Naive thymus-derived CD4-positive, alpha-beta T cell (primary cell): ENCODE measurements at regions of chr21 and their contacts with region 1.

Region 1: GRCh38 chr21:33542640-33543504 is at the start of gene SON:
- DNase-seq: peak; percentile 87 to 99 (median 98)
- ATAC-seq: peak; percentile 94
- H3K4me3 ChIP-seq: peak within 1 kb of the TSS; percentile 95
- H3K4me3 Mint-ChIP-seq: peak within 1 kb of the TSS; percentile 90 to 100 (median 97)
- H3K27ac ChIP-seq: peak within 1 kb of the TSS; percentile 99
- H3K27ac Mint-ChIP-seq: peak within 1 kb of the TSS; percentile 99 to 100 (median 99)
- H3K4me1 ChIP-seq: peaks cover 20 to 30% of the 10 kb centered on the region in 2 donors
- H3K4me1 Mint-ChIP-seq: peaks cover 29 to 54% (median 45%) of the 10 kb centered on the region in 7 donors
- H3K27me3 ChIP-seq: no peaks in the 10 kb centered on the region
- H3K27me3 Mint-ChIP-seq: peaks cover 0 to 5% (median 0%) of the 10 kb centered on the region in 5 donors
- total RNA-seq, gene SON: 337 to 497 (median 431) TPM

Region 2: GRCh38 chr21:32727687-32728455 is 815.0 kb before region 1 on chr21 and contains the start of gene SYNJ1:
- CTCF ChIA-PET with region 1: no interaction called
- POLR2A ChIA-PET with region 1: no interaction called
- intact Hi-C with region 1: loop called (anchors 1 to 10 kb)
- DNase-seq: peak; percentile 90 to 97 (median 93)
- ATAC-seq: peak; percentile 95
- H3K4me3 ChIP-seq: peak within 1 kb of the TSS; percentile 78
- H3K4me3 Mint-ChIP-seq: peak within 1 kb of the TSS; percentile 92 to 100 (median 98)
- H3K27ac ChIP-seq: peak within 1 kb of the TSS; percentile 82
- H3K27ac Mint-ChIP-seq: peak within 1 kb of the TSS; percentile 90 to 99 (median 97)
- H3K4me1 ChIP-seq: peaks cover 7 to 42% of the 10 kb centered on the region in 2 donors
- H3K4me1 Mint-ChIP-seq: peaks cover 29 to 78% (median 69%) of the 10 kb centered on the region in 7 donors
- H3K27me3 ChIP-seq: no peaks in the 10 kb centered on the region
- H3K27me3 Mint-ChIP-seq: no peaks in the 10 kb centered on the region
- total RNA-seq, gene SYNJ1: 21.5 to 28.5 (median 22.2) TPM

Region 3: DNA sequence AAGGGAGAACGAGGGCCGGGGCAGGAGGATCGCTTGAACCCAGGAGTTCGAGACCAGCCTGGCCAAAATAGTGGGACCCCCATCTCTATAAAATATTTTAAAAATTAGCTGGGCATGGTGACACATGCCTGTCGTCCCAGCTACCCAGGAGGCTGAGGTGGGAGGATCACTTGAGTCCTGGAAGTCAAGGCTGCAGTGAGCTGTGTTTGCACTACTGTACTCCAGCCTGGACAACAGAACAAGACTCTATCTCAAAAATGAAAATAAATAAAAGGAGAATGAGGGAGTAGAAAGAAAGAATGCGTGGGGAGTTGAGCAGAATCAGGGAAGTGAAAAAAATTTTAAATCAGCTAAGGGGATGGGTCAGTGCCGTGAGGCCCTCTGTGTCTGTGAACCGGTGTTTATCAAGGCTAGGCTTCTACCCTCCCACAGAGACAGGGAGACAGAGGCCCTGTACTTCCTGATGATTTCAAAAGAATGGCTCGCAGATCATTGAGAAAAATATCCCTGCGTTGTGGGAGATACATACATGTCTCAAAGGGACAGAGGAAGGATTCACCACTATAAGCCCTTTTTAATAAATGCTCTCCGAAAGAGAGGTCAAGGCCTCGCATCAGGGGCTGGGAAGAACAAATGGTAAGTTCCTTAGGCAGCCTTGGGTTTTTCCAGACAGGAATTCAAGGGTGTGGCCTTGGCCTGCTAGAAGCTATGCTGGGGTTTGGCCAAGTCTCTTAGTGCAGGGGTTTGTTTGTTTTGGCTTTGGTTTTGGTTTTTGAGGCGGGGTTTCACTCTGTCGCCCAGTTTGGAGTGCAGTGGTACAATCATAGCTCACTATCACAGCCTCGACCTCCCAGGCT is 256.0 kb before region 1 on chr21:
- CTCF ChIA-PET with region 1: no interaction called
- POLR2A ChIA-PET with region 1: no interaction called
- intact Hi-C with region 1: no loop called
- DNase-seq: no peak
- ATAC-seq: no peak
- H3K4me3 ChIP-seq: no peak overlapping the region
- H3K4me3 Mint-ChIP-seq: no peak overlapping the region
- H3K27ac ChIP-seq: no peak overlapping the region
- H3K27ac Mint-ChIP-seq: peak overlapping the region in 2 of 9 donors; percentile 33 to 43
- H3K4me1 ChIP-seq: peaks cover 0 to 3% of the 10 kb centered on the region in 2 donors
- H3K4me1 Mint-ChIP-seq: peaks cover 8 to 20% (median 12%) of the 10 kb centered on the region in 7 donors
- H3K27me3 ChIP-seq: no peaks in the 10 kb centered on the region
- H3K27me3 Mint-ChIP-seq: no peaks in the 10 kb centered on the region

Region 4: GRCh38 chr21:33380483-33380998 is 162.3 kb before region 1 on chr21:
- CTCF ChIA-PET with region 1: no interaction called
- POLR2A ChIA-PET with region 1: no interaction called
- intact Hi-C with region 1: loop called in 1 of 2 experiments (anchors 5 kb)
- DNase-seq: peak; percentile 46 to 81 (median 63)
- ATAC-seq: peak; percentile 78
- H3K4me3 ChIP-seq: peak overlapping the region; percentile 0
- H3K4me3 Mint-ChIP-seq: peak overlapping the region; percentile 34 to 98 (median 66)
- H3K27ac ChIP-seq: peak overlapping the region; percentile 53
- H3K27ac Mint-ChIP-seq: peak overlapping the region; percentile 69 to 91 (median 87)
- H3K4me1 ChIP-seq: peaks cover 45 to 60% of the 10 kb centered on the region in 2 donors
- H3K4me1 Mint-ChIP-seq: peaks cover 48 to 70% (median 63%) of the 10 kb centered on the region in 7 donors
- H3K27me3 ChIP-seq: peaks cover 0 to 6% of the 10 kb centered on the region in 2 donors
- H3K27me3 Mint-ChIP-seq: peaks cover 0 to 40% (median 0%) of the 10 kb centered on the region in 5 donors

Region 5: DNA sequence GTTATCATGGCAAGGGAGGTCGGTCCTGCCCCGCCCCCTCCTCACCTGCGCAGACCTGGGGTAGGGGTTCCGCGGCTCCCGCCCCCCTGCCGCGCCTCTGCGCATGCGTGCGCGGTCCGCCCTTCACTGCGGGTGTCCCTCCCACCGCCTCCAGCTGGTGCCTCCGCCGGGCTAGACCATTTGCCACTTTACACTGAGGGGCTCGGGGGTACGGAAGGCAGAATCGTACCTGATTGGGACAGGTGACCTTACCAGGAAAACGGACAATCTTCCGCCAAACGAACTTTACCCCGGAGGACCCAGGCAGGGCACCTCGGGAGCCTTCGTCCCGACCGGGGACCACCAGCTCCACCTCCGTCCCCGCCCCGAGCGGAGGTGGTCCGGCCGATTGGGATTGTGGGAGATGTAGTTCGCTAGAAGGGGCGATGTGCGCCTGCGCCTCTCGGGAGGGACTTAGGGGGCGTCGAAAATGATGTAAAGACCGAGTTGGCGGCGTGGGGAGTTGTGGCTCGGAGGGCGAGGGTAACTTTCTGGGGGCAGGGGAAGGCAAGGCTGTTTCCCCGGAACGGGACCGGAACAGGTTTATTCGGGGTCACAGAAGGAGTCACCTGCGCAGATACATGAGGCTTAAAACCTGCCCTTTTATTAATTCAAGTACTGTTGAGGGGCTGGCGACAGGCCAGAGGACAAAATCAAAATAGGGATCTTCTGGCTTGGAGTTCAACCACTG is 51.3 kb before region 1 on chr21 and contains the start of gene DNAJC28:
- CTCF ChIA-PET with region 1: interaction called, 3 read pairs
- POLR2A ChIA-PET with region 1: interaction called, 19 read pairs
- intact Hi-C with region 1: loop called (anchors 1 kb)
- DNase-seq: peak; percentile 91 to 96 (median 95)
- ATAC-seq: peak; percentile 99
- H3K4me3 ChIP-seq: peak within 1 kb of the TSS; percentile 93
- H3K4me3 Mint-ChIP-seq: peak within 1 kb of the TSS; percentile 86 to 97 (median 92)
- H3K27ac ChIP-seq: peak within 1 kb of the TSS; percentile 74
- H3K27ac Mint-ChIP-seq: peak within 1 kb of the TSS; percentile 73 to 97 (median 92)
- H3K4me1 ChIP-seq: peaks cover 0 to 5% of the 10 kb centered on the region in 2 donors
- H3K4me1 Mint-ChIP-seq: peaks cover 5 to 14% (median 12%) of the 10 kb centered on the region in 7 donors
- H3K27me3 ChIP-seq: no peaks in the 10 kb centered on the region
- H3K27me3 Mint-ChIP-seq: peaks cover 0 to 15% (median 0%) of the 10 kb centered on the region in 5 donors
- total RNA-seq, gene DNAJC28: 0.27 to 1.5 (median 0.61) TPM in 4 of 5 experiments, not detected in the other

Region 6: DNA sequence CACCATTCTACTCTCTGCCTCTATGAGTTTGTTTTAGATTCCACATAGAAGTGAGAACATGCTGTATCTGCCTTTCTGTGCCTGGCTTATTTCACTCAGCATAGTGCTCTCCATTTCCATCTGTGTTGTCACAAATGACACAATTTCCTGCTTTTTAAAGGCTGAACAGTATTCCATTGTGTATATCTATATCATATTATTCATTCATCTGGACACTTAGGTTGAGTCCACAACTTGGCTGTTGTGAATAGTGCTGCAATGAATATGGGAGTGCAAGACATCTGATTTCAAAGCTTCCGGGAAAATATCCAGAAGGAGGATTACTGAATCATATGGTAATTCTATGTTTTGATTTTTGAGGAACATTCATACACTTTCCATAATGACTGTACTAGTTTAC is 65.7 kb after region 1 on chr21:
- CTCF ChIA-PET with region 1: interaction called, 5 read pairs
- POLR2A ChIA-PET with region 1: interaction called, 6 read pairs
- intact Hi-C with region 1: loop called in 1 of 2 experiments (anchors 1 kb)
- DNase-seq: no peak
- ATAC-seq: no peak
- H3K4me3 ChIP-seq: no peak overlapping the region
- H3K4me3 Mint-ChIP-seq: no peak overlapping the region
- H3K27ac ChIP-seq: no peak overlapping the region
- H3K27ac Mint-ChIP-seq: peak overlapping the region in 1 of 9 donors; percentile 7
- H3K4me1 ChIP-seq: no peaks in the 10 kb centered on the region
- H3K4me1 Mint-ChIP-seq: peaks cover 0 to 5% (median 4%) of the 10 kb centered on the region in 7 donors
- H3K27me3 ChIP-seq: no peaks in the 10 kb centered on the region
- H3K27me3 Mint-ChIP-seq: no peaks in the 10 kb centered on the region

Region 7: GRCh38 chr21:33915368-33916199 is 372.7 kb after region 1 on chr21 and contains the start of gene ATP5PO:
- CTCF ChIA-PET with region 1: no interaction called
- POLR2A ChIA-PET with region 1: interaction called, 3 read pairs
- intact Hi-C with region 1: loop called in 1 of 2 experiments (anchors 5 kb)
- DNase-seq: peak; percentile 87 to 96 (median 93)
- ATAC-seq: peak; percentile 100
- H3K4me3 ChIP-seq: peak within 1 kb of the TSS; percentile 92
- H3K4me3 Mint-ChIP-seq: peak within 1 kb of the TSS; percentile 93 to 99 (median 98)
- H3K27ac ChIP-seq: peak within 1 kb of the TSS; percentile 92
- H3K27ac Mint-ChIP-seq: peak within 1 kb of the TSS; percentile 87 to 98 (median 97)
- H3K4me1 ChIP-seq: peaks cover 11 to 12% of the 10 kb centered on the region in 2 donors
- H3K4me1 Mint-ChIP-seq: peaks cover 14 to 40% (median 35%) of the 10 kb centered on the region in 7 donors
- H3K27me3 ChIP-seq: no peaks in the 10 kb centered on the region
- H3K27me3 Mint-ChIP-seq: no peaks in the 10 kb centered on the region
- total RNA-seq, gene ATP5PO: 123 to 185 (median 157) TPM